ENCODE measurements at regions of chr5 and their contacts with region 1.

Region 1: DNA sequence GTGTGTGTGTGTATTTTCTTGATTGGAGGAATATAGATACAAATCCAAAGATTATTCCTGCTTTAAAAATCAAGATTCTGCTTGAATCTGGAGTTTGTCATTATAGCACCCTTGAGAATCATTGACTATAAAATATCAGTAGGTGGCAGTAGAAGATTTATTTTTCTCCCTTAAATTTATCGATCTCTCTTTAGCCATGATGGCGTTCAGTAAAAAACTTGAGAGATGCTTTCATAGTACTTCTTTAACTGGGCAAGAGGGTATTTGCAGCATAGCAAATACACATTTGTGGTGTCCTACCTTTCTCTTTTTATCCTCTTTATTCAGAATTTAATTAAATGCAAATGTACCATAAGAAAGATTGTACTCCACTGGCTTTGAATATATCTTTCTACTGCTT is 307.7 kb downstream of the ADGRV1 start:
- DNase-seq: no peak

Region 2: GRCh38 chr5:91419571-91420537 is 553.5 kb after region 1 on chr5:
- intact Hi-C with region 1: loop called in 1 of 2 experiments (anchors 5 kb)
- DNase-seq: peak; percentile 81

Region 3: DNA sequence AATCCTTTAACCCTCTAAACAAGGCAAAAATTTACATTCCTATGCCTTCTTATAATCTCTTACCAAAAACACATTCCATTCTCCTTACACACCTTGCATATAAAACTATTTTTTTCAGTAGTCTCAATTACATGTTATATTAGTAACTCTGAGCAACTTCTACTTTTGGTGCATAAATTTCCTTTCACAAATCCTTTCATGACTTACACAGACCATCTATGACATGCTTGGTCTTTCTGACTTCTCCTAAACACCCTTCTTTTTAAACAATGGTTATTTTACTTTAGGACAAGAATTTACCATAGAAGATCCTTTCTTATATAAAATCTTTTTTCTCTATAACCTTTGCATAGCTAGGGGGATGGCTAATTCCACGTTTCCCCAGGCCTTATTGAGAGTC is 724.7 kb after region 1 on chr5:
- intact Hi-C with region 1: loop called in 1 of 2 experiments (anchors 5 kb)
- DNase-seq: no peak